ENCODE measurements at regions of chr18 and their contacts with region 1.

Region 1: DNA sequence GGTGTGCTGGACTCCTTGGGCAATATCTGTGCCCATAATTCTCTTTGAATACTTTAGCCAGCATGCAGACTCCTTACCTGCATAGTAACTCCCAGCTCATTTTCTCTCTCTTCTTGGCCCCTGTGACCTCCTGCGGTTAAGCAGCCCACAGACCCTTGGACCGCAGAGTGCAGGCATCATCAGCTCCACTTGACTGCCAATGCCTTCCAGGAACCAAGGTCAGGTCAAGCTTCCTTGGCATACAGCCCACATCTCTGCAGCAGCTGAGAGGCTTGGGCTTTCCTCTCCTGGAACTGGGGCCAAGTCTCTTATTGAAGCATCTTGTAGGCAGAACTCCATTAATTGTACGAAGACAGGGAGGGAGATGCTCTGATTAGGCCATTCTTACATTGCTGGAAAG is 130.1 kb upstream of the PIEZO2 start:
- DNase-seq: no peak
- ATAC-seq: no peak
- H3K4me3 ChIP-seq: no peak overlapping the region
- H3K27ac ChIP-seq: no peak overlapping the region
- H3K4me1 ChIP-seq: no peaks in the 10 kb centered on the region
- H3K27me3 ChIP-seq: no peaks in the 10 kb centered on the region; a peak in 2 of 4 replicates
- CTCF ChIP-seq: no peak
- EP300 ChIP-seq: no peak
- POLR2A ChIP-seq: no peak
- RAD21 ChIP-seq: no peak

Region 2: DNA sequence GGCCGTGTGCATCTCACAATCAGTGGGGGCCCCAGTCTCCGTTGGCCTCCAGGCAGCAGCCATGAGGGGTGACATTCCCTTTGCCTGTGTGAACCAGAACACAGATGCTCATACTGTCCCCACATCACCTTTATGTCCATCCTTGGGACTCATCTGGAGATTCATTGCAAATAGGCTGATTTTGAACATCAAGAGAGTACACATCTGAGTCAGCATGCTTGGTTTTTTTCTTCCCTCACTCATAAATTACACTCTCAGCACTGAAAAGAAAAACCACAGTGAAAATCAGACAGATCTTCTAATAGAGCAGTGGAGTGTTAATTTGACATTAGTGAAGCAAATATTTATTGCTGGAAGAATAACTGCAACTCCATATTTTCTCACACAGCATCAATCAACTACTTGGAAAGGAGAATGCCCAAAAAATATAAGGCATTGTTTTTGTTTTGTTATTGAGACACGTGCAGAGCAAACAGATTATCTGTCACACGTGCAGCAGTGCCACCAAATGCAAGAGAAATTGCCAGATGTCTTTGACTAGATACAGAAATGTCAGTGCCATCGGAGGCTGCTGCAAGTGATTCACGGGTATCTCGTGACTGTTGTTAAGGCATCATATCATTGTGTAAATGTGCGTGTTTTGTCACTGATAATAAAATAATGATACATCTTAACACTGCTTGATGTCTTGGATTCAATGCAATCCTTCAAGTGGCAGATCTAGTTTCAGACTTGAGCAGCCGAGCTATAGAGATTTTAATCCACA is 814.1 kb before region 1 on chr18:
- CTCF ChIA-PET with region 1: no interaction called
- POLR2A ChIA-PET with region 1: no interaction called
- RAD21 ChIA-PET with region 1: no interaction called
- SMC1A ChIA-PET with region 1: no interaction called
- in situ Hi-C with region 1: no loop called
- intact Hi-C with region 1: loop called (anchors 10 kb)
- DNase-seq: no peak
- ATAC-seq: no peak; the same call in 2 of the 3 replicates
- H3K4me3 ChIP-seq: no peak overlapping the region
- H3K27ac ChIP-seq: no peak overlapping the region
- H3K4me1 ChIP-seq: no peaks in the 10 kb centered on the region
- H3K27me3 ChIP-seq: peaks cover 2 to 6% of the 10 kb centered on the region in 2 experiments; a peak in 3 of 4 replicates
- CTCF ChIP-seq: no peak
- EP300 ChIP-seq: no peak
- POLR2A ChIP-seq: no peak
- RAD21 ChIP-seq: no peak

Region 3: GRCh38 chr18:11149441-11150270 is 129.8 kb before region 1 on chr18 and contains the start of gene PIEZO2:
- CTCF ChIA-PET with region 1: no interaction called
- POLR2A ChIA-PET with region 1: no interaction called
- RAD21 ChIA-PET with region 1: no interaction called
- SMC1A ChIA-PET with region 1: no interaction called
- in situ Hi-C with region 1: no loop called
- intact Hi-C with region 1: no loop called
- DNase-seq: peak; percentile 43
- ATAC-seq: peak; percentile 89
- H3K4me3 ChIP-seq: peak within 1 kb of the TSS; percentile 95
- H3K27ac ChIP-seq: peak within 1 kb of the TSS; percentile 88
- H3K4me1 ChIP-seq: peaks cover 23% of the 10 kb centered on the region
- H3K27me3 ChIP-seq: no peaks in the 10 kb centered on the region
- CTCF ChIP-seq: no peak
- EP300 ChIP-seq: no peak
- POLR2A ChIP-seq: peak; percentile 89
- RAD21 ChIP-seq: no peak
- polyA plus RNA-seq, gene PIEZO2: 6.7 to 7.1 TPM

Region 4: GRCh38 chr18:11215216-11215615 is 64.2 kb before region 1 on chr18:
- CTCF ChIA-PET with region 1: no interaction called
- POLR2A ChIA-PET with region 1: no interaction called
- RAD21 ChIA-PET with region 1: no interaction called
- SMC1A ChIA-PET with region 1: no interaction called
- in situ Hi-C with region 1: no loop called
- intact Hi-C with region 1: loop called (anchors 10 kb)
- DNase-seq: no peak
- ATAC-seq: no peak
- H3K4me3 ChIP-seq: no peak overlapping the region
- H3K27ac ChIP-seq: no peak overlapping the region
- H3K4me1 ChIP-seq: no peaks in the 10 kb centered on the region
- H3K27me3 ChIP-seq: peaks cover 0 to 14% of the 10 kb centered on the region in 2 experiments; a peak in 2 of 4 replicates
- CTCF ChIP-seq: no peak
- EP300 ChIP-seq: no peak
- POLR2A ChIP-seq: no peak
- RAD21 ChIP-seq: no peak

Region 5: DNA sequence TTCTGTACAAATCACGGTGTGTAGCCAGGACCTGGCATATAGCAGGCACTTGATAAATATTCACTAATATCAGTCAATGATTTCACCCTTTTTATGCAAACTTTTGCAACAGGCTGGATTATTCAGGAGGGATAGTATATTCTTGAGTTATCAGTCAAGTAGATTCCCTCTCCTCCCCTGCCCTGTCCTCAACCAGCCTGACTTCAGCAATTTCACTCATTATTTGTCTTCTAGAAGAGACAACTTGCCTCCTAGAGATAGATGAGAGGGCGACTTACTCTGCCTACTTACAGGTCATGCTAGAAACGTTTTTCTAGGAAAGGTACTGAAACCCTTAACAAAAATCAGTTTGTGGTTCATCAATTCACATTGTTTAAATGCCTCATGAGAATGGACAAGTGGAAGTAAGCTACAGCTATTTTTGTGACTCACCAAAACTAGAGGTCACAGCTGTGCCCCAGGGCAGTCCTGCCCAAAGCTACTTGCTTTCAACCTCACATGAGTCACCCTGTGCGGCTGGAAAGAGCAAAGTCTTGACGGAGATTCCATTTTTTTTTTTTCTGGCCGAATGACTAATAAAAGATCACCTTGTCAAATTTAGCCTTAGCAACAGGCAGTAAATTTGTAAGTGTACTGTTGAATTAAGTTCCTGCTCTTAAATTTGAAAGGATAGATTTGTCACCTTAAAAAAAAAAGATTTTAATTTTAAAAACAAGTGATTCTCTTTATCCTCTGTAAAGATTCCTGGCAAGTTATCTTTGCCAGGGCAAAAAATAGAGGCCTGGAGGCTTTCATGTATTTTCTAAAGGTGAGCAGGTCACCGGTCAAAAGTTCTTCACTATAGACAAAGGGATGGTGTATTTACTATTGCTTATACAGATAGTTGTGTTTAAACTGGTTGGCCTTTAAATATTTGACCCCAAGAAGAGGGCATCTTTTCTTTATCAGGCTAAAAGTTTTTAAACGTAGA is 221.0 kb after region 1 on chr18:
- CTCF ChIA-PET with region 1: no interaction called
- POLR2A ChIA-PET with region 1: no interaction called
- RAD21 ChIA-PET with region 1: no interaction called
- SMC1A ChIA-PET with region 1: no interaction called
- in situ Hi-C with region 1: no loop called
- intact Hi-C with region 1: no loop called
- DNase-seq: peak; percentile 56
- ATAC-seq: peak; percentile 97
- H3K4me3 ChIP-seq: no peak overlapping the region
- H3K27ac ChIP-seq: no peak overlapping the region
- H3K4me1 ChIP-seq: no peaks in the 10 kb centered on the region
- H3K27me3 ChIP-seq: no peaks in the 10 kb centered on the region
- CTCF ChIP-seq: no peak
- EP300 ChIP-seq: 0 out of 4 replicates have a peak, but pooled peaks of 1 of the 2 experiments have one; percentile 34
- POLR2A ChIP-seq: no peak
- RAD21 ChIP-seq: no peak